Activated B cell treated with CpG ODN at 0.5 μM for 24 hours (primary cell): ENCODE measurements at regions of chr6 and their contacts with region 1.

Region 1: GRCh38 chr6:27126815-27127537 is 120.5 kb upstream of the PRSS16 start:
- DNase-seq: peak; percentile 55
- ATAC-seq: peak; percentile 79
- H3K4me3 Mint-ChIP-seq: peak overlapping the region; percentile 81
- H3K27ac Mint-ChIP-seq: peak overlapping the region; percentile 82
- H3K4me1 Mint-ChIP-seq: peaks cover 14% of the 10 kb centered on the region
- H3K27me3 Mint-ChIP-seq: no peaks in the 10 kb centered on the region
- CTCF ChIP-seq: peak; percentile 54

Region 2: DNA sequence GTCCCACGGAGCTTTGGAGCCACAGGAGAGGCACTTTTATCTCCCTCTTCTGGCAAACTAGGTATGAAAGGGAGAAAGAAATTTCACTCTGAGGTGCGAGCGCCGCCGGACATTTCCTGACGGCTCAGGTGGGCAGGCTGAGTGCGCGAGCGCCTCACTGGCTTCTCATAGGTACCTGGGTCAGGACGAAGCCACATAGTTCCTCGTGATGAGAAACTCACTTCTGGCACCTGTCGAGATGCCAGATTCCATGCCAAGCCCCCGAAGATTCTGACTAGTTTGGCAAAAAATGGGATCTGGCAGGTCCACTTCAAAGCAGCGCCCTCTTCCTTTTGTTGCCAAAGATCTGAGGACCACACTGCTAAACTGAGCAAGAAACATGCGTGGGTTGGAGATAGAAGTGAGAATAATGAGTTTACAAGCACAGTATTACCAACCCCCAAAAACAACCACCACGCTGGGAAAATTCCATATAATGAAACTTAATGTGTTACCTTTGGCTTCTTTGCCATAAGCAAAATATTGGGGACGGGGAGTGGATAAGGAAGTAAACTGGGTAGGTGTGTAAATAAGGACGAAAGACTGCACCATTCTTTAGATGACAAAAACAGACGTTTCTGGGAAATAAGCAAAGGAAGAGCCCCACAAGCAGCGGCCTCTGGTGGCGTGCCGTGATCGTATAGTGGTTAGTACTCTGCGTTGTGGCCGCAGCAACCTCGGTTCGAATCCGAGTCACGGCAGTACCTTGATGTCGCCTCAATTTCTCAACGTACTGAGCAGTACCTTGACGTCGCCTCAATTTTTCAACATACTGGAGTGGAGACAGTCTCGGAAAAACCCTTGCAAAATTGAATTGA is 30.7 kb after region 1 on chr6:
- CTCF ChIA-PET with region 1: interaction called, 20 read pairs
- POLR2A ChIA-PET with region 1: interaction called, 12 read pairs
- intact Hi-C with region 1: loop called (anchors 1 kb)
- DNase-seq: peak; percentile 60
- ATAC-seq: peak; percentile 80
- H3K4me3 Mint-ChIP-seq: peak overlapping the region; percentile 89
- H3K27ac Mint-ChIP-seq: peak overlapping the region; percentile 81
- H3K4me1 Mint-ChIP-seq: peaks cover 33% of the 10 kb centered on the region
- H3K27me3 Mint-ChIP-seq: no peaks in the 10 kb centered on the region
- CTCF ChIP-seq: no peak